Activated B cell treated with CpG ODN at 0.5 μM for 24 hours (primary cell): ENCODE measurements at regions of chr16 and their contacts with region 1.

Region 1: DNA sequence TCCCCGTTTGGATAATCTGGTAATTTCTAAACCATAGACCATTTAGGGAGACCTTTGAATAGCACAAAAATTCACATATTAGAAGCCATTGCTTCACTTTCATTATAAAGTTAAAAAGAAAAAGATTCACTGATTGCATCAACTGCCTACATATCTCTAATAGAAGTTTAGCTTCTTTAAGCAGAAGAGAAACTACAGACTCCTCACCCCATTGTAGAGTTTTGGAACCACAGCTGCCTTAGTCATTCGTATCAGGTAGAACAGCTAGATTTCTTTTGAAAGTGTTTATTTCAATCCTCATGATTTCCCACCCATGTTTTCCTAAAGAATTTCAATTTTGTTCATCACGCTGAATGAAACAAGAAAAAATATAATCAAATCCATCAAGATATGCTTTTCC is 144.8 kb downstream of the CDH8 start:
- DNase-seq: no peak
- ATAC-seq: no peak
- H3K4me3 Mint-ChIP-seq: no peak overlapping the region
- H3K27ac Mint-ChIP-seq: no peak overlapping the region
- H3K4me1 Mint-ChIP-seq: no peaks in the 10 kb centered on the region
- H3K27me3 Mint-ChIP-seq: no peaks in the 10 kb centered on the region
- CTCF ChIP-seq: no peak

Region 2: DNA sequence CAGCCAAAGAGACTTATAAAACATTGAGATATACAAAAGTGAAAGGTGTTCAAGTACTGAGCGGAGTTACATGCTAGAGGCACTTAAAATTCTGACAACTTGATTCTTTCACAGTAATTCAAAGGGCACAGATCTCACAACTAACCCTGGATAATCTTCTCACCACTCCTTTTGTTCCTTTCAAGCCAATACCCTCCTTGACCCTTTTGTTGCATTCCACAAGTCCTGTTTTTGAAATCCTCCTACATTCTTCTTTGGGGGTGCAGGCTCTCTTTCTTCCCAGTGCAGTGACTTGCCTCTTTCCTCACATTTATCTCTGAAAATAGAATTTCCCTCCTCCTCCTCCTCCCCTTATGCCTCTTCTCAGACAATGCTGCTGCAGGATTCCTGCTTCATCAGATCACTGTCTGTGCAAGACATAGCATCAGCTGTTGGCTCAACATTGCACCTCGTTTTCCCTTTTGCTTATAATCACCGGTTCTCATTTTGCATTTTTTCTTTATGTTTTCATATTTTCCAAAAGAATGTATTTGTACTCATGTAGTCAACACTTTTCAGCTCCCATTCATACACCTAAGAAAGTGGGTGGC is 54.6 kb before region 1 on chr16:
- CTCF ChIA-PET with region 1: no interaction called
- POLR2A ChIA-PET with region 1: no interaction called
- intact Hi-C with region 1: loop called (anchors 10 kb)
- DNase-seq: no peak
- ATAC-seq: no peak
- H3K4me3 Mint-ChIP-seq: no peak overlapping the region
- H3K27ac Mint-ChIP-seq: no peak overlapping the region
- H3K4me1 Mint-ChIP-seq: no peaks in the 10 kb centered on the region
- H3K27me3 Mint-ChIP-seq: no peaks in the 10 kb centered on the region
- CTCF ChIP-seq: no peak

Region 3: DNA sequence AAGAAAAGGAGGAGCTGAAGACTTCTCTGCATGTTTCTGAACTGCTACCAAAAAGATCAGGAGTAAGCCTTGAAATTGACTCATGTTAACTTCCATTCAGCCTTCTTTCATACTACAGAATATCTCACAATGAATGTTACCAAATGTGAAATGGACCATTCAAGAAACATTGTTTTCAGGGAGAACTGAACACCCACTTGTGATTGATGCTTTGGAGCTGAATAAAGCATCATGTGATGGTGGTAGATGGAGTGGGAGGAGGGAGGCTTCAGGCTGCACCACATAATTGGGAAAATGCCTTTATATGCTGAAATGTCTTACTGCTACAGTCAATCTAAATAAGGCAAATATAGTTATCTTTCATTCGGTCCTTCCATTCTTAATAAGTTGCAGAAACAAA is 17.0 kb after region 1 on chr16:
- CTCF ChIA-PET with region 1: no interaction called
- POLR2A ChIA-PET with region 1: no interaction called
- intact Hi-C with region 1: no loop called
- DNase-seq: no peak
- ATAC-seq: no peak
- H3K4me3 Mint-ChIP-seq: no peak overlapping the region
- H3K27ac Mint-ChIP-seq: no peak overlapping the region
- H3K4me1 Mint-ChIP-seq: no peaks in the 10 kb centered on the region
- H3K27me3 Mint-ChIP-seq: no peaks in the 10 kb centered on the region
- CTCF ChIP-seq: no peak